Right ventricle myocardium inferior (tissue), 1 donor: ENCODE measurements at regions of chr17 and their contacts with region 1.

Region 1: DNA sequence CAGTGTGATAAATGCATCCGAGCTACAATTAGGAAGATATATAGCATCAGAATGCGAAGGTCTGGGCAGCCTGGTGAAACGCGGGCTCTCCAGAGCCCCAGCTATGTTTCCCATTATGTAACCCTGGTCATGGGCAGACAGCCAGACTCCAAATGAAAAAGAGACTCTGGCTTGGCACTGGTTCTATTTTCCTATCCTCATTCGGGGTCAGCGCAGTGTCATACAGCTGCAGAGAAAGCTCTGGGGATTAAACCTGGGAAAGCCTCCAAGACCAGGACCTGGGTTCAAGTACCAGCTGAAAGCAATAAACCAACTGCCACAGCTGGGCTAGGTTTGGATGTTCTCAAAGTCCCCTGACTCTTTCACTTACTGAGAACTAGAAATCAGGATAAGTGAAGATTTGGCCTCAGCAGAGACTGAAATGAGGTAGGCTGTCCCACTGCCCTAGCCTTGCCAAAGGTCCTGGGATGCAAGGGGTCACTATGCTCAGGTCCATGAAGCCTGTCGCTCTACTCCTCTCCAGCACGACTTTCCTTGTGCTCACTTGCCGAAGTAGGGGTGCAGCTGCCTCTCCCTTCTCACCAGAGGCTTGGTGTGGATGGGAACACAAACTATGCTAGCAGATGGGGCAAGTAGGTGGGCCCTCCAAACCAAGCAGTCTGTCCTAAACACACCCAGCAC is 123.8 kb downstream of the SMG6 start:
- DNase-seq: peak; percentile 69
- ATAC-seq: peak; percentile 64

Region 2: GRCh38 chr17:1852327-1852726 is 327.4 kb before region 1 on chr17:
- intact Hi-C with region 1: no loop called
- DNase-seq: no peak
- ATAC-seq: no peak

Region 3: GRCh38 chr17:2054512-2055291 is 125.1 kb before region 1 on chr17 and contains the start of gene HIC1:
- intact Hi-C with region 1: loop called (anchors 2 kb)
- DNase-seq: peak; percentile 93
- ATAC-seq: peak; percentile 74
- total RNA-seq, gene HIC1: 22.7 TPM

Region 4: GRCh38 chr17:2070241-2071023 is 109.3 kb before region 1 on chr17:
- intact Hi-C with region 1: loop called (anchors 5 kb)
- DNase-seq: peak; percentile 31
- ATAC-seq: no peak

Region 5: DNA sequence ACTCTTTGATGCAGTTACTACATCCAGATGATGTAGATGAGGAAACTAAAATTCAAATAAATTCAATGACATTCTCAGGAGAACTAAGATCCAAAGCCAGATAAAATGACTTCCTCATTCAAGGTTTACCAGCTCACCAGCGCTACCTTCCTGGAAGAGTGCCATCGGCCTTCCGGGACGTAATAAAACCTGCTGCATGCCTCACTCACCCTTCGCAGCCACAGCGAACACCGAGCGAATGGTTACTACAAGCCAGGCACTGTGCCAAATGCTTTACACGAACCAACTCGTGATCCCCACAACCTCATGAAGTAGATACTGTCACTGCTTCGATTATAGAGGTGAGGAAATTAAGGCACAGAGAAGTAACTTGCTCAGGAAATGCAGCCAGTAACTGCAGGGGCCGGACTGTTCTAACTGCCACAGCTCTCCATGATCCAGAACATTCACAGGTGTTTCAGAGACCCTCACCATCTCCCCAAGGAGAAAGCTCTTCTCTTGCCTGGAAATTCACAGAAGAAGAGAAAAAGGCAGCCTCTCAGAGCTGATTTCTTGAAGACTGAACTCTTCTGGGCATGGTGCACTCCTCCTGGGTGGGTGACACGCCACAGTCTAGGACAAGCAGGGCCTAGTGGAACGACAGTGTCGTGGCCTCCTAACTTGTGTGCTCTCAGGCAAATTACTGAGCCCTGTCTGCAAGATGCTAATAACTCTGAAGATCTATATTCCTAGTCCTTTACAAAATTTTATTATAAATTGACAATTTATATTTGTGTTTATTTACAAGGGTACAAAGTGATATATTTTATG is 78.1 kb before region 1 on chr17:
- intact Hi-C with region 1: loop called (anchors 5 kb)
- DNase-seq: no peak
- ATAC-seq: no peak

Region 6: DNA sequence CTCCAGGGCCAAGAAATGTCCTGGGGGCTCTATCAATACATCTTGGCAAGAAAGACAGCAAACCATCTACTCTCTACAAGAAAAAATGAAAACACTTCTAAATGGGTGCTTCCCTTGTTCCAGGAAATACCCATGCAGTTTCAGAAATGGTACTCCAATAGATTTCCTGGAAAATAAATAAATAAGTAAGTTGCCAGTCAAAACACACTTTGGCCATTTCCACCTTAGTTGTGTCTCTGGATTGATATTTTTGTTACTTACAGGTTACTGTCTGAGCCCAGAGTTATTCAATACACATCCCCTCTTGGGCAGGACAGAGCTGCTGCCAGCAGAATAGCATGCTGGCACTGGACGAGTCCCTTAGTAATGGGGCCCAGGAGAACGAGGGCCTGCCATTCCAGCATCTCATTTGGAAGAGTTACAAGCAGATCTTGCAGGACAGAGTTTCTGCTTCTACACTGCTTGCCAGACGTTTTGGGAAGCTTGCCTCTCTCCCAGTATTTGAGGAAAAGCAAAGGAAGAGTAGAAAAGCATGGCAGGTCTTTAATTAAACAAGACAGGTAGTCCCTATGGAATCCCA is 23.3 kb after region 1 on chr17:
- intact Hi-C with region 1: loop called (anchors 2 kb)
- DNase-seq: no peak
- ATAC-seq: peak; percentile 57

Region 7: DNA sequence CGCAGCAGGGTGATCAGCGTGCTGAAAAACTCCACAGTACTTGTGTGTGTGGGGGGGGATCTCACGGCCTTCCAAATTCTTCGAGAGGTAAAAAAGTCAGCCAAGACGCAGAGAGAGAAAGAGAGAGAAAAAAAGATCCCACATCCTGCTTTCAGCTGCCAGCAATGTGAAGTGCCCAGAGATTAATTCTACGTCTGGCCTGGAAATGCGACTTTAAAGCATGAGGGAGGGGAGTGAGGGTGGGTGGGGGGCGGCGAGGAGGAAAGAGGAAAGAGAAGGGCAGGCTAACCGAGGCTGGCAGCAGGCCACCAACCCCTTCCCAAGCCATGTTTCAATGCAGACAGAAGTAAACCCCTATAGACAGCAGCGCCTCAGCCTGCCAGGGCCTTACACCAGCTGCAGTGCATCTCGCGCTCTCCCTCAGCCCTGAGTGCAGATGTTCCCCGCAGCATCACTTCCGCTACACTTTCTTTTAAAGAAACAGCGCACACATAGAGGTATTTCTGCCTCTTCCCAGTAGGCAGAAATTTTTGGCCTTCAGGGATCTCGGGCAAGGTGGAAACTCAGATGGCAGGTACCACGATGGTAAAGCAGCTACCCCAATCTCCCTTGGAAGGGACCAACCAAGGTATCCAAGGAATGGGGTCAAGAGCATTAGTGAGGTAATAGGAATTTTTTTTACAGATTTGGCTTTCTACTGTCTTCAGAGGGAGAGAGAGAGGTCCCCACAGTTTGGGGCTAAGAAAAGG is 36.0 kb after region 1 on chr17:
- intact Hi-C with region 1: loop called (anchors 2 kb)
- DNase-seq: peak; percentile 89
- ATAC-seq: peak; percentile 78

Region 8: DNA sequence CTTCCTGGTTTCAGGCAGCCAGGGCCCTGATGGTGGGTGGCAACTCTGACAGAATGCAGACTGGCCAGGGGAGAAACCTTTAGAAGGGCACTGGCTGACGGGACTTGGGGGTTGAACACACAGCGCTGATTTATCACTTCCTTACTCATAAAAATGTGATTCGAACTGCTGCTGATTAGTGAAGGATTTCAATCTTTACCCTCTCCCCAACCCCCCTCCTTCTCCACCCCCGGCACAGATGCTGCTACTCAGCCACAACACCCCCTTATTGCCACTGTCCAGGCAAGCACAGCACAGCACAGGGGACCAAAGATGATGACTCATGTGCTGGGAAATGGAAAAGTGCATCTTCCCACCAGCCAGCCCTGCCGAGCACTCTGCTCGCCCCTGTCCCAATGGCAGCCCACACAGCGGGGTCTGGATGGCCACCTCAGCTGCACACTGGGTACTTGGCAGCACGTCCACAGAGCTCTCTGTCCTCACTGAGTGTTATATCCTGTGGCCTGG is 53.7 kb after region 1 on chr17:
- intact Hi-C with region 1: loop called (anchors 2 kb)
- DNase-seq: no peak
- ATAC-seq: peak; percentile 17